ENCODE measurements at regions of chr20 and their contacts with region 1.

Region 1: GRCh38 chr20:24350923-24351368 is 118.5 kb upstream of the SYNDIG1 start:
- DNase-seq: no peak
- ATAC-seq: no peak
- H3K4me3 ChIP-seq: no peak overlapping the region
- H3K27ac ChIP-seq: no peak overlapping the region
- H3K4me1 ChIP-seq: no peaks in the 10 kb centered on the region
- H3K27me3 ChIP-seq: peaks cover 0 to 4% (median 0%) of the 10 kb centered on the region in 7 donors
- CTCF ChIP-seq: no peak

Region 2: GRCh38 chr20:24303381-24303780 is 47.6 kb before region 1 on chr20:
- intact Hi-C with region 1: loop called in 1 of 10 experiments (anchors 10 kb)
- DNase-seq: no peak
- ATAC-seq: no peak
- H3K4me3 ChIP-seq: no peak overlapping the region
- H3K27ac ChIP-seq: no peak overlapping the region
- H3K4me1 ChIP-seq: no peaks in the 10 kb centered on the region
- H3K27me3 ChIP-seq: peaks cover 0 to 28% (median 4%) of the 10 kb centered on the region in 7 donors
- CTCF ChIP-seq: peak in 6 of 9 donors; percentile 12 to 40 (median 28)